Psoas muscle (tissue), 8 donors: ENCODE measurements at regions of chr7 and their contacts with region 1.

Region 1: GRCh38 chr7:120950539-120951308 is at the start of gene ING3:
- DNase-seq: peak; percentile 95 to 98
- ATAC-seq: peak; percentile 96 to 98 (median 97)
- H3K4me3 ChIP-seq: peak within 1 kb of the TSS; percentile 73
- H3K27ac ChIP-seq: peak within 1 kb of the TSS; percentile 91
- H3K4me1 ChIP-seq: peaks cover 19% of the 10 kb centered on the region
- H3K27me3 ChIP-seq: no peaks in the 10 kb centered on the region
- CTCF ChIP-seq: no peak
- total RNA-seq, gene ING3: 7.1 to 10.1 (median 9.6) TPM

Region 2: DNA sequence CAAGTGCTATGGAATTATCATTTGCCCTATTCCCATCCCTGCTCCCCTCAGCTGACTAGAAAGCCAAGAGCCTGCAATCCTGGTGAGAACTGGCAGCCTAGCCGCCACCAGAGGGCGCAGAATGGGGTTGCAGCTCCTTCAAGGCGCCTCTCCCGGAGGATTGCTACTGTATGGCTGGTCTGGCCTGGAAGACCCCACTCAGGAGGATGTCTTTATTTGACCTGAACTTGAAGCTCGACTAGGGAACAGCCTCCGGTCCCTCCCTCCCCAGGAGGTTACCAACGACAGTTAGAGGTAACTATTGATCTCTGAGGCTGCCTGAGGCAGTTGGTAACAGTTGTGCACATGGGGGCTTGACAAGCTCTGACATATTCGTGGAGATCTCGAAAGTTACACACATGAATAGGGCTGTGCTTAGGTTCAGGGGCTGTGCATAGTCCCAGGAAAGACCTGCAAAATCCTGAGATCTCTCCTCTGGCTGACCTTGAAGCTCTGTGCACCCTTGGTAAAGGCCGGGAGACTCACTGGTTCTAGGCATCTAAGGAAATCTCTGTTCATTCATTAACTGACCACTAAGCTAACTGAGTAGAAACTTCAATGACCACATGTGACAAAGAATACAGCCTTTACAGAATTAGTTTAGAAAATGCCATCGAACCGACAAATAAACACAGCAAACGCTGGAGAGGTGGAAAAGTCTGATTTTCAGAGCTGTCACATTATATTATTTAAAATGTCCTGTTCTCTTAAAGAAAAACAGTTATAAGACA is 158.4 kb before region 1 on chr7:
- intact Hi-C with region 1: loop called in 1 of 2 experiments (anchors 5 kb)
- DNase-seq: peak; percentile 62 to 74
- ATAC-seq: peak in 3 of 4 donors; percentile 57 to 74 (median 58)
- H3K4me3 ChIP-seq: no peak overlapping the region
- H3K27ac ChIP-seq: no peak overlapping the region
- H3K4me1 ChIP-seq: no peaks in the 10 kb centered on the region
- H3K27me3 ChIP-seq: no peaks in the 10 kb centered on the region
- CTCF ChIP-seq: peak; percentile 70

Region 3: GRCh38 chr7:120857588-120858573 is 92.8 kb before region 1 on chr7 and contains the start of gene TSPAN12:
- intact Hi-C with region 1: loop called in 1 of 2 experiments (anchors 2 kb)
- DNase-seq: peak; percentile 82 to 89
- ATAC-seq: peak; percentile 88 to 96 (median 94)
- H3K4me3 ChIP-seq: peak within 1 kb of the TSS; percentile 83
- H3K27ac ChIP-seq: peak within 1 kb of the TSS; percentile 83
- H3K4me1 ChIP-seq: no peaks in the 10 kb centered on the region
- H3K27me3 ChIP-seq: no peaks in the 10 kb centered on the region
- CTCF ChIP-seq: peak; percentile 71
- total RNA-seq, gene TSPAN12: 1.6 to 3.8 (median 2.5) TPM

Region 4: GRCh38 chr7:120987683-120988590 is 37.2 kb after region 1 on chr7:
- intact Hi-C with region 1: loop called in 1 of 2 experiments (anchors 5 kb)
- DNase-seq: peak; percentile 90 to 95
- ATAC-seq: peak; percentile 83 to 89 (median 87)
- H3K4me3 ChIP-seq: peak overlapping the region; percentile 75
- H3K27ac ChIP-seq: peak overlapping the region; percentile 94
- H3K4me1 ChIP-seq: peaks cover 12% of the 10 kb centered on the region
- H3K27me3 ChIP-seq: no peaks in the 10 kb centered on the region
- CTCF ChIP-seq: peak; percentile 98

Region 5: GRCh38 chr7:122457965-122458364 is 1507.2 kb after region 1 on chr7:
- intact Hi-C with region 1: no loop called
- DNase-seq: no peak
- ATAC-seq: no peak
- H3K4me3 ChIP-seq: no peak overlapping the region
- H3K27ac ChIP-seq: no peak overlapping the region
- H3K4me1 ChIP-seq: no peaks in the 10 kb centered on the region
- H3K27me3 ChIP-seq: no peaks in the 10 kb centered on the region
- CTCF ChIP-seq: no peak